ENCODE measurements at regions of chr6 and their contacts with region 1.

Region 1: GRCh38 chr6:105646391-105646867 is 243.5 kb upstream of the PREP start:
- DNase-seq: peak; percentile 70
- H3K4me3 Mint-ChIP-seq: no peak overlapping the region
- H3K27ac Mint-ChIP-seq: peak overlapping the region; percentile 85
- H3K4me1 Mint-ChIP-seq: peaks cover 78% of the 10 kb centered on the region
- H3K27me3 Mint-ChIP-seq: peaks cover 4% of the 10 kb centered on the region

Region 2: DNA sequence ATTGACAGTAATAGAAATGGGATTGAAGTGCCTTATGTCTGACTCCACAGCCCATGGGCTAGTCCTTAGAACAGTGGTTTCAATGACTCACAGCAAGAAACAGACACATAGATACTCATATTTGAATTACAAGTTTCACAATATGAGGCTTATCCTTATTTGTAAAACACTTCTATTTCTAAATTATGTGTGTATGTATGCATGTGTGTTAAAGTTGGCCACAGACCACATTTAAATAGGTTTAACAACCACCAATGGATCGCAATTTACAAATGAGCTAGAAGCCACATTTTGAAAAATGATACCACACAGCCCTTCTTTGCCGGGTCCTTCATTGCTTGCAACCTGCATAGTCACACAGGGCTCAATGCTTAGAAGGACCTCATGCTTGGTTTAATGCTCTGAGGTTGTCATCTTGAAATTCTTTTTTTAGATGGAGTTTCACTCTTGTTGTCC is 85.8 kb before region 1 on chr6:
- intact Hi-C with region 1: loop called (anchors 1 kb)
- DNase-seq: no peak
- H3K4me3 Mint-ChIP-seq: no peak overlapping the region
- H3K27ac Mint-ChIP-seq: no peak overlapping the region
- H3K4me1 Mint-ChIP-seq: peaks cover 14% of the 10 kb centered on the region
- H3K27me3 Mint-ChIP-seq: peaks cover 5% of the 10 kb centered on the region

Region 3: GRCh38 chr6:105633814-105634213 is 12.6 kb before region 1 on chr6:
- intact Hi-C with region 1: loop called (anchors 1 kb)
- DNase-seq: no peak
- H3K4me3 Mint-ChIP-seq: no peak overlapping the region
- H3K27ac Mint-ChIP-seq: peak overlapping the region; percentile 38
- H3K4me1 Mint-ChIP-seq: peaks cover 34% of the 10 kb centered on the region
- H3K27me3 Mint-ChIP-seq: peaks cover 5% of the 10 kb centered on the region

Region 4: GRCh38 chr6:105786890-105787655 is 140.6 kb after region 1 on chr6:
- intact Hi-C with region 1: loop called (anchors 2 kb)
- DNase-seq: no peak
- H3K4me3 Mint-ChIP-seq: peak overlapping the region; percentile 16
- H3K27ac Mint-ChIP-seq: peak overlapping the region; percentile 81
- H3K4me1 Mint-ChIP-seq: peaks cover 79% of the 10 kb centered on the region
- H3K27me3 Mint-ChIP-seq: no peaks in the 10 kb centered on the region

Region 5: GRCh38 chr6:105981002-105981887 is 334.8 kb after region 1 on chr6:
- intact Hi-C with region 1: loop called (anchors 1 kb)
- DNase-seq: peak; percentile 48
- H3K4me3 Mint-ChIP-seq: peak overlapping the region; percentile 84
- H3K27ac Mint-ChIP-seq: peak overlapping the region; percentile 91
- H3K4me1 Mint-ChIP-seq: peaks cover 79% of the 10 kb centered on the region
- H3K27me3 Mint-ChIP-seq: no peaks in the 10 kb centered on the region

Region 6: GRCh38 chr6:106163446-106163965 is 517.1 kb after region 1 on chr6:
- intact Hi-C with region 1: loop called (anchors 1 kb)
- DNase-seq: peak; percentile 49
- H3K4me3 Mint-ChIP-seq: peak overlapping the region; percentile 69
- H3K27ac Mint-ChIP-seq: peak overlapping the region; percentile 98
- H3K4me1 Mint-ChIP-seq: peaks cover 73% of the 10 kb centered on the region
- H3K27me3 Mint-ChIP-seq: peaks cover 3% of the 10 kb centered on the region

Measured in activated T-helper 1 cell treated with anti-CD3 and anti-CD28 coated beads, Interleukin-12 subunit alpha, Interleukin-12 subunit beta, Interleukin-2, Interleukin-4 antibody, amounts not matched to agents 30 ng/mL and 10 ng/mL and 1 ng/mL, durations not matched to agents 14 hours and 24 hours and 36 hours (primary cell).